Left colon (tissue), 2 donors: ENCODE measurements at regions of chr5 and their contacts with region 1.

Region 1: DNA sequence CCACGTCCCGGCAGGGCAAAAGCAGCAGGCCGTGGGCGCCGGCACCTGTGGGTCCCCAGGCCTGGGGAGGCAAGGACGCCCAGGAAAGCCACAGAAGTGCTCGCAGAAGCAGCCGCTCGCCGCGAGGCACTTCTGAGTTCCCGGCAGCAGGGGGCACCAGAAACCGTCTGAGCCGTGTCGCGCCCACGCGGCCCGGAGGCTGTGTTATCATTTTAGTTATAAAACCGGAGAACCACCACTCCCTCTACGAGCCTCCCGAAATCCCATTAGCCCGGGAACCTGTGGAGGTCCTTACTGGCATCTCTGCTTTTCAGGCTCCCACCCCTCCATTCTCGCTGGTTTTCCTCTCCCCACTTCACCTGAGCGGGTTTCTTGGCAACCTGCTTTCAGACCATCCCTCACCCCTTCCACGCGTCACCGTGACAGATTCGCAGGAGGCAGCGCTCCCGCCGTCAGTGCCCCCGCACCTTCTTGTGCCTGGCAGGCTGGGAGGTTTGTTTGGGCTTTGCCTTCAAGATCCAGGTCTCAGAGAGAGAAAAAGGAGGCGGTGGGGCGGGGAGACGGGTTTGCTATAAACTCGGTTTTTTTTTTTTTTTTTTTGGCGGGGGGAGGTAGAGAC is 2.3 kb downstream of the GDNF start:
- DNase-seq: peak; percentile 47 to 68
- ATAC-seq: peak; percentile 63

Region 2: DNA sequence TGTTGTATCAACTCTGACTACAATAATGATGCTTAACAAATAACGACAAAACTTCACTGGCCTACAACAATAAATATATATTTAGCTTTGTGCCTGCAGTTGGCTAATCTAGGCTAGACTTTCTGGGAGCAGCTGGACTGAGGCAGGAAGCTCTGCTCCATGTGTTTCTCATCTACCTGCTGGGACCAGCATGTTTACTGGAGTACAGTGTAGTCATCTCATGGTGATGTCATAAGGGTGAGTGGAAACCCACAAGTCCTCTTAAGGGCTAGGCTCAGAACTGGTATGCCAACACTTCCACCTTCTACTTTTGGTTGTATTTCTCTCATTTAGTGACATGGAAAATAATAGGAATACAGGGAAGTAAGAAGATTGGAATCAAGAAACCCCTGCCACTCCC is 1046.7 kb before region 1 on chr5:
- intact Hi-C with region 1: no loop called
- DNase-seq: no peak
- ATAC-seq: no peak

Region 3: GRCh38 chr5:37412515-37413277 is 424.8 kb before region 1 on chr5:
- intact Hi-C with region 1: loop called in 1 of 2 experiments (anchors 5 kb)
- DNase-seq: peak; percentile 29 to 36
- ATAC-seq: peak; percentile 97

Region 4: DNA sequence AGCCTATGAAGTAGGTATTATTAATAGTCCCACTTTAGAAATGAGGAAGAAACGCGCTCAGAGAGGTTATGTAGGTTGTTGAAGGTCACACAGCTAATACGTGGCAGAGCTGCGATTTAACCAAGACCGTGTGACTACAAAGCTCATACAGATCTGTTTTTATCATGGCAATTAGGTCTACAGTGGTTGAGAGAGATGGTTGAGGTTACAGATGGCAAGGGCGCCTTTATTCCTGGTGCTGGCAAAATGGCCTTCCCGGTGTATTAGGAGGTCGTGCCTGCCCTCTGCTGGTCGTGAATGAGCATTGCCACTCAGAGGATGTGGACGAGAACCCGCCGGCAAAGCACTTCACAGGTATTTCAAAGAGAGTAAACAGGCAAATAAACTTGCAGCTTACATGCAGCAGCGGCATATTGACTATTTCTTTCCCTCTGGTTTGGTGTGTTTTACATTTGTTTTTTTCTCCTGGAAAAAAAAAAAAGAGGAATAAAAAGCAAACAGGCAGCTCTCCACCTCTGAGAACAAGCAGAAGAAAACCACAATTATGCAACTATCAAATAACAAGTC is 355.6 kb after region 1 on chr5:
- intact Hi-C with region 1: loop called (anchors 5 kb)
- DNase-seq: peak; percentile 29 to 69
- ATAC-seq: peak; percentile 85